ENCODE measurements at regions of chr12 and their contacts with region 1.

Region 1: DNA sequence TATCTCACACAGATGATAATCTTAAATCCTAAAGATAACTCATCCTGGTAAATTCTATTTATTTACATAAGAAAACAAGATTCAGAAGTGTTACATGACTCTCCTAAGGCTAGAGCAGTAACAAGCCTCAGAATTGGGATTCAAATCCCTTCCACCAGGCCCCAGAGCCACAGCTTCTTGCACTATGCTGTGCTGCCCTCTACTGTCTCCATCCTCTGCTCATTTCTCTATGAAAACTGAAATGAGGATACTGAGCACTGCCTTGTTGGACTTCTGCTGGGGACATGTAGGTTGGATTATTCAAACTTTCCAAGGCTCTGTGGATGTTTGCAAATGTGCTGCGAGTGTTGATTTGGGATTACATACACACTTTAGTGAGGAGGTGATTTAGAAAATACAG is 23.5 kb upstream of the C12orf50 start:
- DNase-seq: no peak
- ATAC-seq: no peak
- H3K4me3 Mint-ChIP-seq: no peak overlapping the region
- H3K27ac Mint-ChIP-seq: no peak overlapping the region
- H3K4me1 Mint-ChIP-seq: no peaks in the 10 kb centered on the region
- H3K27me3 Mint-ChIP-seq: no peaks in the 10 kb centered on the region
- CTCF ChIP-seq: no peak

Region 2: GRCh38 chr12:88092771-88093170 is 40.1 kb after region 1 on chr12:
- CTCF ChIA-PET with region 1: no interaction called
- POLR2A ChIA-PET with region 1: no interaction called
- intact Hi-C with region 1: loop called (anchors 5 kb)
- DNase-seq: no peak
- ATAC-seq: no peak
- H3K4me3 Mint-ChIP-seq: no peak overlapping the region
- H3K27ac Mint-ChIP-seq: no peak overlapping the region
- H3K4me1 Mint-ChIP-seq: no peaks in the 10 kb centered on the region
- H3K27me3 Mint-ChIP-seq: no peaks in the 10 kb centered on the region
- CTCF ChIP-seq: no peak

Measured in activated B cell treated with CpG ODN at 0.5 μM for 24 hours (primary cell).